ENCODE measurements at regions of chr9 and their contacts with region 1.

Region 1: GRCh38 chr9:37465249-37466036 is at the start of gene ZBTB5:
- DNase-seq: peak; percentile 99
- H3K4me3 ChIP-seq: peak within 1 kb of the TSS; percentile 74 to 80
- H3K27ac ChIP-seq: peak within 1 kb of the TSS; percentile 97 to 99
- H3K4me1 ChIP-seq: no peaks in the 10 kb centered on the region
- H3K27me3 ChIP-seq: no peaks in the 10 kb centered on the region
- CTCF ChIP-seq: no peak
- POLR2A ChIP-seq: peak; percentile 77
- total RNA-seq, gene ZBTB5: 17.8 to 26.6 TPM

Region 2: GRCh38 chr9:37119907-37120842 is 345.3 kb before region 1 on chr9 and contains the start of gene ZCCHC7:
- intact Hi-C with region 1: loop called (anchors 10 kb)
- DNase-seq: peak; percentile 93
- H3K4me3 ChIP-seq: peak within 1 kb of the TSS; percentile 83 to 87
- H3K27ac ChIP-seq: peak within 1 kb of the TSS; percentile 81 to 90
- H3K4me1 ChIP-seq: no peaks in the 10 kb centered on the region
- H3K27me3 ChIP-seq: no peaks in the 10 kb centered on the region
- CTCF ChIP-seq: peak in 1 of 4 experiments; percentile 13
- POLR2A ChIP-seq: peak; percentile 88
- total RNA-seq, gene ZCCHC7: 12.7 to 14.2 TPM

Region 3: GRCh38 chr9:37415011-37415719 is 50.3 kb before region 1 on chr9:
- intact Hi-C with region 1: loop called (anchors 10 kb)
- DNase-seq: peak; percentile 56
- H3K4me3 ChIP-seq: no peak overlapping the region
- H3K27ac ChIP-seq: no peak overlapping the region
- H3K4me1 ChIP-seq: no peaks in the 10 kb centered on the region
- H3K27me3 ChIP-seq: no peaks in the 10 kb centered on the region
- CTCF ChIP-seq: peak; percentile 59 to 81 (median 71)
- POLR2A ChIP-seq: no peak

Measured in prostate gland (tissue), 2 donors.